Left ventricle myocardium superior (tissue), 1 donor: ENCODE measurements at regions of chr18 and their contacts with region 1.

Region 1: DNA sequence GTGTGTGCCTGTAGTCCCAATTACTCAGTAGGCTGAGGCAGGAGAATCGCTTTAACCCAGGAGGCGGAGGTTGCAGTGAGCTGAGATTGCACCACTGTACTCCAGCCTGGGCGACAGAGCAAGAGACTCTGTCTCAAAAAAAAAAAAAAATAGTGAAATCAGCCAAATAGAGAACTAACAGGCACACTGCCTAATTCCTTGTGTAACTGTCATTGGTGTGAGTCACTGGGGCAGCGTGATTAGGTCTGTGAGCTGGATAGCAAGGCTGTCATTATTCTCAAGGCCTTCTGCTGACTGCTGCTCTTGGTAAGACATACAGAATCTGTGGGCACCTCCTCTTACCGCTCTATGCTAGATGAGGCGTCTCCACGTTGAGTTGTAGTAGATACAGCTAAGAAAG is 270.3 kb downstream of the NEDD4L start:
- DNase-seq: peak; percentile 44
- ATAC-seq: peak; percentile 77

Region 2: DNA sequence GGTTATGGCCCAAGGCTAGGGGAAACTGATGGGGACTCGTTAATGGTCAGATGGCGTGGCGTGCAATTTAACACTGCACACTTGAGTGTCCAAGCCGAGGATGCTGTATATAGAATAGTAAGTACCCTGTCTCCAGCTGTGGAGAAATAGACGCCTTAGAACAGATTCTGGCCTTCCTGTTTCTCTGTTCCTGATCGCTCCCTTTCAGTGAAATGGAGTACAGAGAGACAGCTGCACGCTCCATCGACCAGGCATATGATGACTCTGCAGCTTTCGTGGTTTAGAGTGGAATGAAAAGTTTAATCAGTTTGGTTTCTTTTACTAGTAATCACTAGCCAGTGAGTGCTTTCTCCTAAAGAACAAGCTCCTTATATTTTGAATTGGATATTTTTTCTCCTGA is 56.8 kb before region 1 on chr18:
- intact Hi-C with region 1: loop called (anchors 10 kb)
- DNase-seq: no peak
- ATAC-seq: peak; percentile 23